HepG2 (cell line): ENCODE measurements at regions of chr14 and their contacts with region 1.

Region 1: DNA sequence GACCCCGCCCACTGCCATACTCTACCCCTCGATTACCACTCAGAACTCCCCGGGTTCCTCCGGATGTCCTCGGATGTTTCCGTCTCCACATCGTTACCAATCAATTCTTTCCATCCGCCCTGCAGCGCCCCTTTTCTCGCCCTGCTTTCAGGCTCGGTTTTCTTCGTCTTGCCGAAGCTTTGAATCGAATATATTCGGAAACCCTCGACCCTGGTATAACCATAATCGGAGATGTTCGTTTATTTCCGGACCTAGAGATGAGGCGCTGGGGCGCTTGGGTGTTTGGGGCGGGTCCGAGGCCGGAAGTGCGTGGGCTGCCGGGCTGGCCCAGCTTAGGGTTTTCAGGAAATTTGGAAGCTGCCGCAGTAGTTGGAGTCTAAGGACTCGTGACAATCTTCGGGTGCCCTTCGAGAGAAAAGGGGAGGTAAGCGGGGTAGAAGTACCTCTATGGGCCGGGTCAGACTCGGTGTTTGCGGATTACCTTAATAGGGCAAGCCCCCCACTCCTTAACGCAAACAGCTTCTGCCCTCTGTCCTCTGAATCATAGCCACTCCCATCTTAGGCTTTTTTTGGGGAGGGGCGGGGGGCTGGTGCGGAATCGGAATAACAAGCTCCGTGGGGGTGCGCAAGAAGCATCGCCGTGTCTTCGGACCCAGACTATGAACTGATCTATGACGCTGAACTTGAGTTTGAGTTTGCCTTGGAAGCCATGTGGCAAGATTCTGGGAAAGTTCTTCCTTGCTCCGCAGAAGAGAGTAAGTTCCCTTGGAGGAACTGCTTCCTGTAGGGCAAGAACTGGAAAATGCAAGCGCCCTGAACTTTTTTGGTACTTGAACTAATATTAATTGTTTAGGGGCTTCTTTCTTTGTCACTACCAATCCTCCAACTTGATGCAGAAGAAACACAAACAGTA is at the start of gene C14orf119:
- DNase-seq: peak; percentile 100
- ATAC-seq: peak; percentile 92
- H3K4me3 ChIP-seq: peak within 1 kb of the TSS; percentile 71 to 96 (median 95)
- H3K27ac ChIP-seq: peak within 1 kb of the TSS; percentile 89
- H3K4me1 ChIP-seq: peaks cover 37% of the 10 kb centered on the region
- H3K27me3 ChIP-seq: no peaks in the 10 kb centered on the region; a peak in 1 of 5 replicates
- CTCF ChIP-seq: peak; percentile 16; the same call in 1 of the 2 replicates
- EP300 ChIP-seq: no peak; a peak in 2 of 4 replicates
- POLR2A ChIP-seq: peak in 1 of 2 experiments; percentile 55; a peak in 2 of 4 replicates
- RAD21 ChIP-seq: peak; percentile 42; the same call in 1 of the 2 replicates
- total RNA-seq, gene C14orf119: 206 and 299 TPM in 2 replicates

Region 2: DNA sequence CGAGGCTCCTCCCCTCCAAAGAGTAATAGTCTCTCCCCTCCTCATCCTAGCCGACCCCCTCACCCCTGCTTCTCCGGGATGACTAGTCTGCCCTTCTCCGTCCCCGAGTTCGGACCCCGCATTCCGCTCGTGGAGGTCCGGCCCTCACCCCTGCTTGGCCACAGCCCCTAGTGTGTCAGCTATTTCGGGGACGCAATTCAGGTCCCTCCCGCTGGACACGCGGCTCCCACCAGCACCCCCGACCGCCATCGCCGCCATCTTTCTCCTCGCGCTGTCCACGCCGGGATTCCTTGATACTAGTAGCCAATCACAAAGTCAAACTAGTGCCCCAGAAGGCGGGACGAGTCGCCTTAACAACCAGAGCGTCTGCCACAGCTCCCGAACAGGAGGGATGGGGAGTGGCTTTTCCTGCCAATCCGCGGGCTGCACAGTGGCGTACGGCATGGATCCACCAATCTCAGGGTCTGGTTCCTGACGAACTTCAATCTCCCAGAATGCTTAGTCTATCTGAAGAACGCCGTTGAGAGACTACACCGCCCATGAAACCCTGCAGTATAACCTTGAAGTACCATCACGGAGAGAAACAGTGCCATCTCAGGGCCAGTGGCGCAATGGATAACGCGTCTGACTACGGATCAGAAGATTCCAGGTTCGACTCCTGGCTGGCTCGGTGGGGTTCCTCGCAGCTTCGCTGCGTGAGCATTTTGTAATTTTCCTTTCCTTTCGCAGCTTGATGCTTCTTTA is 166.2 kb before region 1 on chr14 and contains the start of gene PRMT5:
- CTCF ChIA-PET with region 1: no interaction called
- POLR2A ChIA-PET with region 1: interaction called, 32 read pairs
- in situ Hi-C with region 1: no loop called
- intact Hi-C with region 1: no loop called
- DNase-seq: peak; percentile 100
- ATAC-seq: peak; percentile 98
- H3K4me3 ChIP-seq: peak within 1 kb of the TSS; percentile 77 to 98 (median 92)
- H3K27ac ChIP-seq: peak within 1 kb of the TSS; percentile 78
- H3K4me1 ChIP-seq: peaks cover 27% of the 10 kb centered on the region
- H3K27me3 ChIP-seq: no peaks in the 10 kb centered on the region; a peak in 1 of 5 replicates
- CTCF ChIP-seq: peak; percentile 60
- EP300 ChIP-seq: peak; percentile 56 to 82; a peak in 3 of 4 replicates
- POLR2A ChIP-seq: peak; percentile 96 to 98
- RAD21 ChIP-seq: peak; percentile 74
- total RNA-seq, gene PRMT5: 210 and 289 TPM in 2 replicates

Region 3: DNA sequence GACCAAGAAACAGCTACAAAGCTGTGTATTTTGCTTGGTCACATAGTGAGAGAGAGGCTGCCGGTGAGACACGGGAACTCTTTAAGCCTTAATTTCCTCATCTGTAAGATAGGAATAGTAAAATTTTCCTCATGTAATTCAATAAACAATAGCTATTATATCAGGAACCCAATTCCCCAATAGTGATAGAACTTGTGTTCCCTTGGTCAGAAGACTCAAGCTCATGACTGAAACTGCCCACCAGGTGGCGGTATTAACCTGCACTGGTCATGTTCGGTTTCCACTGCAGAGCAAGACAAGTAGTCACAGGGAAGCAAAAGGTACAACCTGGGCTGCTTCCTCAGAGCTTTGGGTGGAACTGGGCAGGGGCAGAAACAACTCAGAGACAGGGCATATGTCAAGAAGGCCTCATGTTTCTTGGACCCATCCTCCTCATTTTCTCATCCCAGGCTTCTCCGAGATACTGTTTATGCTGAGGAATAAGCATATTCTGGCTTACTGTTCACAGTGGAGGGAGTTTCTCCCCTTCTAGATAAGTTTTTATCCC is 108.9 kb before region 1 on chr14:
- CTCF ChIA-PET with region 1: no interaction called
- POLR2A ChIA-PET with region 1: interaction called, 38 read pairs
- in situ Hi-C with region 1: no loop called
- intact Hi-C with region 1: no loop called
- DNase-seq: peak; percentile 93
- ATAC-seq: peak; percentile 56
- H3K4me3 ChIP-seq: no peak overlapping the region
- H3K27ac ChIP-seq: no peak overlapping the region
- H3K4me1 ChIP-seq: peaks cover 37% of the 10 kb centered on the region
- H3K27me3 ChIP-seq: no peaks in the 10 kb centered on the region; a peak in 1 of 5 replicates
- CTCF ChIP-seq: no peak
- EP300 ChIP-seq: 0 out of 4 replicates have a peak, but pooled peaks of 1 of the 2 experiments have one; percentile 14
- POLR2A ChIP-seq: no peak
- RAD21 ChIP-seq: peak; percentile 96

Region 4: DNA sequence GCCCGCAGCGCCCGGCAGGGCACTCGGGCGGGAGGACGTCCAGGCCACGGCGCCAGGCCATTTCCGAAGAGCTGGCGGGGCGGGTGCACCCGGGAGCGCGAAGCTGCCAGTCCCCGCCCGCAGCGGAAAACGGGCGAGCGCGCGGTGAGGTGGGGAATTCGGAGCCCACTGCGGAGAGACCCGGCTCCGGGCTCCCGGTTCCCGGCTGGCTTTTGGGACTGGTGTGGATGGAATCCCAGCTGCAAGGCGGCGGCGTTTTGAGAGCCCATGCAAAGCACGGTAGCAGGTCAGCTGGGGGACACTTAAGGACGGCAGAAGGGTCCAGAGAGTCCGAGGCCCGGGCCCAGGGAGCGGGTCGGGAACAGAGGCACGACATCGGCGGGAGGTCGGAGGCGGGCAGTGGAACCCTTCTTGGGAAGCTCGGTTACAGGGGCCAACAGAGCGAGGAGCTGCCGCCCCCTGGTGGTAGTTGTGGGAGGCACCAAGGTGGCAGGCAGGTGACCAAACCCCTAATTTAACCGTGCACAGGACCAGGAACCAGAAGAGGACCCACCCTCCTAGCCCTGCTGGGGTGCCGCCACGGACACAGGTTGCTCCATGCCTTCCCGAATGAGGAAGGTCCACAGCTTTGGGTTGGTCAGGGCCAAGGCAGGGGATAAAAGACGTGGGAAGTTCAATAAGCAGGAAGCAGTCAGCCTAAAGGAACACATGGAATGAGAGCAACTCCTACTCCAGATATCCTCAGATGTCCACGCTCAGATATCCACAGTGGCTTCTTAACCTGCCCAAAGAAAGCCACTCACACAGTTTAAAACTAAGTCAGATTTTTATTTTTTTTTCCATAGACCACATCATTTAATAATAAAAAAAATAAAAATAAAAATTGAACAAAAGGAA is 37.4 kb before region 1 on chr14:
- CTCF ChIA-PET with region 1: no interaction called
- POLR2A ChIA-PET with region 1: interaction called, 33 read pairs
- in situ Hi-C with region 1: no loop called
- intact Hi-C with region 1: no loop called
- DNase-seq: peak; percentile 92
- ATAC-seq: peak; percentile 71
- H3K4me3 ChIP-seq: peak overlapping the region; percentile 55 to 88 (median 64)
- H3K27ac ChIP-seq: no peak overlapping the region
- H3K4me1 ChIP-seq: peaks cover 29% of the 10 kb centered on the region
- H3K27me3 ChIP-seq: peaks cover 0 to 6% of the 10 kb centered on the region in 2 experiments; a peak in 1 of 5 replicates
- CTCF ChIP-seq: peak; percentile 100
- EP300 ChIP-seq: peak in 1 of 2 experiments; percentile 66; a peak in 1 of 4 replicates
- POLR2A ChIP-seq: peak in 1 of 2 experiments; percentile 39; a peak in 1 of 4 replicates
- RAD21 ChIP-seq: peak; percentile 98

Region 5: GRCh38 chr14:23114669-23115491 is 19.4 kb after region 1 on chr14:
- CTCF ChIA-PET with region 1: no interaction called
- POLR2A ChIA-PET with region 1: interaction called, 66 read pairs
- in situ Hi-C with region 1: no loop called
- intact Hi-C with region 1: no loop called
- DNase-seq: peak; percentile 52
- ATAC-seq: peak; percentile 7
- H3K4me3 ChIP-seq: no peak overlapping the region
- H3K27ac ChIP-seq: no peak overlapping the region
- H3K4me1 ChIP-seq: peaks cover 46% of the 10 kb centered on the region
- H3K27me3 ChIP-seq: peaks cover 53 to 98% of the 10 kb centered on the region in 2 experiments
- CTCF ChIP-seq: no peak
- EP300 ChIP-seq: no peak
- POLR2A ChIP-seq: no peak
- RAD21 ChIP-seq: no peak

Region 6: DNA sequence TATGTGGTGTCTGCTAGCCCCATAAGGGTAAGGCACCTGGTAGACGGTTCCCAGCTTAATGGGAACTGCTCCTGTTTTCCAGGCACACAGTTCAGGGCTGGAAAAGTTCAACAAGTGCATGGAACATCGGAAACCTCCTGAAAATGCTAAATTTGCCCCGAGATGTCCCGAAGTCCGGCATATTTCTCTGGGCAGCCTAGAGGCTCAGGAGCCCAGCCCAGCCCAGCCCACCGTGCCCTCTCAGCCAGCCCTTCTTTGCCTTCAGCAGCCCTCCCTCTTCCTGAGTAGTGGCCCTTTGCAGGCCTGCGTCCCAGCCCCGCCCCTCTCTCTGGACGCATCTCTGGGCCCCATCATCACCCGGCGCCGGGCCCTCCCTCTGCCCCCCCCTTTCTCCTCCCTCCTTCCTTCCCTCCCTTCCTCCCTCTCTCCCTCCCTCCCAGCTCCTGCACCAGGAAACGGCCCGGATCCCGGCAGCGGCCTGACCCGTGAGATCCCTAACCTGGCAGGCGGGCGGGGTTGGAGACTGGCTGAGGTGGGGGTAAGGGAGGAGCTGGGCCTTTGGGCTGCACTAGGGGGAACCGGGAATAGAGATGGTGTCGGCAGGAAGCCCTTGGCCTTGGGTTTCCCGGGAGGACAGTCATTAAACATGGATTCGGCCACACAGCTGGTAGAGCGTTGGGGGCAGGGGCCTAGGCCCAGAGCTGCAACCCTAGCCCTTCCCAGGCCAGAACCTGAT is 211.1 kb after region 1 on chr14 and contains the start of gene BCL2L2:
- CTCF ChIA-PET with region 1: no interaction called
- POLR2A ChIA-PET with region 1: interaction called, 47 read pairs
- in situ Hi-C with region 1: no loop called
- intact Hi-C with region 1: no loop called
- DNase-seq: peak; percentile 98
- ATAC-seq: peak; percentile 76
- H3K4me3 ChIP-seq: peak within 1 kb of the TSS; percentile 95 to 99 (median 96)
- H3K27ac ChIP-seq: peak within 1 kb of the TSS; percentile 87
- H3K4me1 ChIP-seq: peaks cover 60% of the 10 kb centered on the region
- H3K27me3 ChIP-seq: no peaks in the 10 kb centered on the region; a peak in 1 of 5 replicates
- CTCF ChIP-seq: peak; percentile 54
- EP300 ChIP-seq: peak; percentile 69 to 85
- POLR2A ChIP-seq: peak in 1 of 2 experiments; percentile 90; a peak in 2 of 4 replicates
- RAD21 ChIP-seq: no peak
- total RNA-seq, gene BCL2L2: 26.6 and 28.1 TPM in 2 replicates